ENCODE measurements at regions of chr9 and their contacts with region 1.

Region 1: DNA sequence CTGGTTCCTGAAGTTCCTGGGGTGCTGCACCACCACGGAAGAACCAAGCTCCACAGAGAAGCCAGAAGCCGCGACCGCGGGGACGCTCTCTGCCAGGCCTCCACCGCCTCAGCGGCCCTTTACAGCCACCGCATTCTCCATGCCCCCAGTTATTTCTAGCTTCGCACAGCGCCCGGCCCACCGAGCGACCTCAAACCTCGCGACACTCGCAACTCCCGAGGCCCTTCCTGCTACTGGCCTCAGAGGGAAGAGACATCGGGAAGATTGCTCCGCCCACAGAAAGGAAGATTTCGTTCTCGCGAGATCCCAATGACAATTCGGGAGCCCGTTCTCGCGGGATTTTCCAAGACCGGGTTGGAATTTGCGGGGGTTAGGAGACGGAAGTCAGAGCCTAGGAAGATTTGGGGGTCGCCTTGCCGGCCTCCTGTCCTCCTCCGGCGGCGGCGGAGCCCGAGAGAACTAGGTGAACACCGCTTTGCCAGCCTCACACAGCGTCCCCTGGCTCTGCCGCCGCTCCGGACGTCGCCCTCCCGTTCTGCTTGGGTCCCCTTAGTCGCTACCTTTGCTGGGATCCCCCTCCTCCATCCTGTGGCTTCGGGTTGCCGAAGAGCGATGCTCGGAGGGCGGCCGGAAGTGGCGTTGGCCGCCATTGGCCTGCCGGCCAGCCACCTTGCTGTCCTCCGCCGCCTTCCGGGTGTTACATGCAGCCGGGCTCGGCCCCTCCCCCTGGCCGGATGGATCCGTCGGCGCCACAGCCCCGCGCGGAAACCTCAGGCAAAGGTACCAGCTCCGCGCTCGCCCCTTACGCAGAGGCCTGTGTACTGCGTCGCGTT is at the start of gene ERCC6L2:
- DNase-seq: peak; percentile 98
- H3K4me3 ChIP-seq: no peak within 1 kb of the TSS
- H3K27ac ChIP-seq: peak within 1 kb of the TSS; percentile 100
- H3K27me3 ChIP-seq: no peaks in the 10 kb centered on the region
- CTCF ChIP-seq: 0 out of 2 replicates have a peak, but pooled peaks have one; percentile 16
- polyA plus RNA-seq, gene ERCC6L2: 30.1 and 39.1 TPM in 2 replicates

Region 2: GRCh38 chr9:95556521-95556920 is 319.0 kb before region 1 on chr9:
- CTCF ChIA-PET with region 1: no interaction called
- POLR2A ChIA-PET with region 1: no interaction called
- DNase-seq: no peak
- H3K4me3 ChIP-seq: no peak overlapping the region
- H3K27ac ChIP-seq: no peak overlapping the region
- H3K27me3 ChIP-seq: peaks cover 13% of the 10 kb centered on the region
- CTCF ChIP-seq: no peak

Region 3: GRCh38 chr9:95813923-95814322 is 61.6 kb before region 1 on chr9:
- CTCF ChIA-PET with region 1: no interaction called
- POLR2A ChIA-PET with region 1: interaction called, 10 read pairs
- DNase-seq: no peak
- H3K4me3 ChIP-seq: no peak overlapping the region
- H3K27ac ChIP-seq: no peak overlapping the region
- H3K27me3 ChIP-seq: peaks cover 3% of the 10 kb centered on the region
- CTCF ChIP-seq: no peak

Region 4: DNA sequence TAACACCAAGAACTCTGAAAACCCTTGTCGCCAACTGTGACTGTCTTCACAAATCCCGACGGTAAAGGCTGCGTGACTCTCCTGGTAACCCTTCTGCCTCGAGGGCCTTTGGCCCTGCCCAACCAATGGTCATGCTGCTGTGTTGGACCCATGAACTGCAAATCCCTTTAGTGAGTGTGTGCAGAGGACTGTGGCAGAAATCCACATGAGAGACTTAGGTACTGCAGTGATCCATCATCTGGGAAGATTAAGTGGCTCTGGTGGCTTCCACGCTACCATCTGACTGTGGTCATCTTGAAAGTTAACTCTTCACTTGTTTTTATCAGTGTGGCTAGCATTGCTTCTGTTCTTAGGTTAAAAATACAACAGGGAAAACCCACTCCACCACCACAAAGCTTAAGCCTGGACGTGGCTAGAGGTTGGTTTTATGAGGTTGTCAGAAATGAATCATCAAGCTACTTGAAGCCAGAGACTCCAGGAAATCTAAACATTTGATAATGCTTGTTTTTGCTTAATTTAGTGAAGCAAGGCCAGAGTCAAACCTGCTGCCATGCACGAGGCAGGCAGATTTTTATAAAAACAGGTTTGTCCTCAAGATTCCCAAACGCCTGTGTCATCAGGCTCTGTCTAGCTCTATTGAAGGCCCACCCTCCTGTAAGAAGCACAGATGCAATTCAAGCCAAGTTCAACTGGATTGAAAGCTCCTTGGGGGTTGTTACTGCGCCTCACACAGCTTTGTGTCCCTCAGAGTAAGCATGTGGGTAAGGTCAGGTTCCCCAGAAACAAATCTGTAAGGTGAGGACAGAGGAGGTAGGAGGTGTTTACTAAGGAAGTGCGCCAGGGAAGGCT is 52.7 kb before region 1 on chr9:
- CTCF ChIA-PET with region 1: no interaction called
- POLR2A ChIA-PET with region 1: interaction called, 18 read pairs
- DNase-seq: peak; percentile 91
- H3K4me3 ChIP-seq: no peak overlapping the region
- H3K27ac ChIP-seq: peak overlapping the region; percentile 82
- H3K27me3 ChIP-seq: no peaks in the 10 kb centered on the region
- CTCF ChIP-seq: no peak

Region 5: DNA sequence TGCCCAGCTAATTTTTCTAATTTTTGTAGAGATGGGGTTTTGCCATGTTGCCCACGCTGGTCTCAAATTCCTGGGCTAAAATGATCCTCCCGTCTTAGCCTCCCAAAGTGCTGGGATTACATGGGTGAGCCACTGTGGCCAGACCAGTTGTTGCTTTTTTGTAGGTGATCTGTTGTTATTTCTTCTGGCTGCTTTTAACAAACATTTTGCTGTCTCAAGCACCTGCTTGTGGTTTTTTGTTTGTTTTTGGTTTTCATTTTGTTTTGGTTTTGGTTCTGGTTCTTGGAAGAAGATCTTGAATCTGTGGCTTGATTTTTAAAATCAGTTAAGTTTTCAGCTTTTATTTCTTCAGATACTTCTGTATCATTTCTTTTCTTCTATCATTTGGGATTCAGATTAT is 21.1 kb after region 1 on chr9:
- CTCF ChIA-PET with region 1: no interaction called
- POLR2A ChIA-PET with region 1: no interaction called
- DNase-seq: no peak
- H3K4me3 ChIP-seq: no peak overlapping the region
- H3K27ac ChIP-seq: no peak overlapping the region
- H3K27me3 ChIP-seq: no peaks in the 10 kb centered on the region
- CTCF ChIP-seq: no peak

Region 6: GRCh38 chr9:95981761-95982390 is 106.4 kb after region 1 on chr9:
- CTCF ChIA-PET with region 1: no interaction called
- POLR2A ChIA-PET with region 1: no interaction called
- DNase-seq: no peak
- H3K4me3 ChIP-seq: no peak overlapping the region
- H3K27ac ChIP-seq: no peak overlapping the region
- H3K27me3 ChIP-seq: no peaks in the 10 kb centered on the region
- CTCF ChIP-seq: no peak